CD8-positive, alpha-beta memory T cell (primary cell): ENCODE measurements at regions of chr3 and their contacts with region 1.

Region 1: DNA sequence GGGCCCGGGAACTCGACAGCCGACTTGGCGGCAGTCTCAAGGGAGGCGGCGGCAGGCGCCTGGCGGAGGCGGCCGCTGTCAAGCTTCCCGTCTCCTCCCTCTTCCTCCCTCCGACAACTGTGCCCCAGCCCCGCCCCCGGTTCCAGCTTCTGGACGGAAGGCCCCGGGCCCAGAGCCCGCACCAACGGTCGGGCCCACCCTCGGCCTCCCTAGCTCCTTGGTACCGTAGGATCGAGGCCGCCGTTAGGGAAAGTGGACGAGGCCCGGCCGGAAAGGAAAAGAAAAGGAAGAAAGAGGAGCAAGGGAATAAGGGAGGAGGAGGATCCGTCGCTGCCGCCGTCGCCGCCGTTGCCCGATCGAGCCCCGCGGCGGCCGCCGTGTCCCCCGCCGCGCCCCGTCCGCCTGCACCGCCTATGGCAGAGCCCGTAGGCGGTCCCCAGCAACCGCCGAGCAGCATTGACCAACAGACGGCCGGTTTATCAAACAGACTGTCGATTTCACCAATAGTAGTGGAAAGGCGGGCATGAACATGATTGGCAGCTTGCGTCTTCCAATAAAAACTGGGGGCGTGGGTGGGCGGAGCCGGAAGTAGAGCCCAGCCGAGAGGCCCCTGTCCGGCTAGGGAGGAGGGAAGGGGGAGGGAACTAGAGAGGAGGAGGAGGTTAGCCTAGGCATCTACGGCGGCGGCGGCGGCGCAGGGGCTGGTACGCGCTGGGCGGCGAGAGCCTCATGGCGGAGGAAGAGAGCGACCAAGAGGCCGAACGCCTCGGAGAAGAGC is at the starts of genes CGGBP1 and ZNF654:
- DNase-seq: peak; percentile 96 to 100 (median 99)
- H3K4me3 ChIP-seq: peak within 1 kb of the TSS; percentile 90
- H3K4me3 Mint-ChIP-seq: peak within 1 kb of the TSS; percentile 91 to 99 (median 96)
- H3K27ac ChIP-seq: peak within 1 kb of the TSS; percentile 81
- H3K27ac Mint-ChIP-seq: peak within 1 kb of the TSS; percentile 96 to 98 (median 98)
- H3K4me1 ChIP-seq: peaks cover 47% of the 10 kb centered on the region
- H3K4me1 Mint-ChIP-seq: peaks cover 66 to 77% (median 74%) of the 10 kb centered on the region in 3 donors
- H3K27me3 ChIP-seq: no peaks in the 10 kb centered on the region
- H3K27me3 Mint-ChIP-seq: no peaks in the 10 kb centered on the region
- total RNA-seq, gene CGGBP1: 94.5 to 95.9 TPM
- total RNA-seq, gene ZNF654: 16.0 to 16.4 TPM

Region 2: GRCh38 chr3:87227104-87227834 is 831.5 kb before region 1 on chr3 and contains the start of gene CHMP2B:
- CTCF ChIA-PET with region 1: no interaction called
- POLR2A ChIA-PET with region 1: interaction called, 10 read pairs
- DNase-seq: peak; percentile 86 to 94 (median 90)
- H3K4me3 ChIP-seq: peak within 1 kb of the TSS; percentile 96
- H3K4me3 Mint-ChIP-seq: peak within 1 kb of the TSS; percentile 97 to 100 (median 99)
- H3K27ac ChIP-seq: peak within 1 kb of the TSS; percentile 89
- H3K27ac Mint-ChIP-seq: peak within 1 kb of the TSS; percentile 93 to 99 (median 98)
- H3K4me1 ChIP-seq: peaks cover 24% of the 10 kb centered on the region
- H3K4me1 Mint-ChIP-seq: peaks cover 44 to 52% (median 47%) of the 10 kb centered on the region in 3 donors
- H3K27me3 ChIP-seq: no peaks in the 10 kb centered on the region
- H3K27me3 Mint-ChIP-seq: peaks cover 3 to 8% of the 10 kb centered on the region in 2 donors
- total RNA-seq, gene CHMP2B: 31.2 to 33.9 TPM

Region 3: DNA sequence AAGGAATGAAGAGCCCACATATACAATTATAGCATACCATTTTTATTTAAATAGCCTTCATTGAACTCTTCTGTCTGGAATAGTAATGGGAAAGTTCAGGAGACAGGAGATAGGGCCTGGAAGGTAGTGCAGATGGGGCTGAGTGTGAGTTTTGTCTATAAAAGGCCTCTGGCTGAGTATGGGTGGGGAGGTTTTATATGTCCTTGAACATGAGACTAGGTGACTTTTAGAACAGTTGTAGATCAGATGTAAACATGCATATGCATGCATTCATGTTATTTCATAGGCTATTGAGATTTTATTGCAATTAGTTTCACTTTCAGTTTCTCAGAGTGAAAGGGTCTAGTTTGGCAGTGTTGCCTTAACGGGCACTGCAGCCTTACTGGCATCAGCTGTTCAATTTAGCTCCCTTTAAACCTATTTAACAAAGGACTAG is 27.1 kb before region 1 on chr3:
- CTCF ChIA-PET with region 1: interaction called, 9 read pairs
- POLR2A ChIA-PET with region 1: interaction called, 21 read pairs
- DNase-seq: peak; percentile 5 to 53 (median 45)
- H3K4me3 ChIP-seq: peak overlapping the region; percentile 38
- H3K4me3 Mint-ChIP-seq: peak overlapping the region; percentile 80 to 89 (median 86)
- H3K27ac ChIP-seq: peak overlapping the region; percentile 47
- H3K27ac Mint-ChIP-seq: peak overlapping the region; percentile 76 to 97 (median 94)
- H3K4me1 ChIP-seq: peaks cover 22% of the 10 kb centered on the region
- H3K4me1 Mint-ChIP-seq: peaks cover 24 to 38% (median 36%) of the 10 kb centered on the region in 3 donors
- H3K27me3 ChIP-seq: no peaks in the 10 kb centered on the region
- H3K27me3 Mint-ChIP-seq: peaks cover 0 to under 1% of the 10 kb centered on the region in 2 donors

Region 4: GRCh38 chr3:88101142-88101541 is 42.4 kb after region 1 on chr3:
- CTCF ChIA-PET with region 1: no interaction called
- POLR2A ChIA-PET with region 1: no interaction called
- DNase-seq: no peak
- H3K4me3 ChIP-seq: no peak overlapping the region
- H3K4me3 Mint-ChIP-seq: no peak overlapping the region
- H3K27ac ChIP-seq: no peak overlapping the region
- H3K27ac Mint-ChIP-seq: peak overlapping the region in 1 of 8 donors; percentile 47
- H3K4me1 ChIP-seq: no peaks in the 10 kb centered on the region
- H3K4me1 Mint-ChIP-seq: peaks cover 20 to 22% (median 20%) of the 10 kb centered on the region in 3 donors
- H3K27me3 ChIP-seq: no peaks in the 10 kb centered on the region
- H3K27me3 Mint-ChIP-seq: no peaks in the 10 kb centered on the region

Region 5: DNA sequence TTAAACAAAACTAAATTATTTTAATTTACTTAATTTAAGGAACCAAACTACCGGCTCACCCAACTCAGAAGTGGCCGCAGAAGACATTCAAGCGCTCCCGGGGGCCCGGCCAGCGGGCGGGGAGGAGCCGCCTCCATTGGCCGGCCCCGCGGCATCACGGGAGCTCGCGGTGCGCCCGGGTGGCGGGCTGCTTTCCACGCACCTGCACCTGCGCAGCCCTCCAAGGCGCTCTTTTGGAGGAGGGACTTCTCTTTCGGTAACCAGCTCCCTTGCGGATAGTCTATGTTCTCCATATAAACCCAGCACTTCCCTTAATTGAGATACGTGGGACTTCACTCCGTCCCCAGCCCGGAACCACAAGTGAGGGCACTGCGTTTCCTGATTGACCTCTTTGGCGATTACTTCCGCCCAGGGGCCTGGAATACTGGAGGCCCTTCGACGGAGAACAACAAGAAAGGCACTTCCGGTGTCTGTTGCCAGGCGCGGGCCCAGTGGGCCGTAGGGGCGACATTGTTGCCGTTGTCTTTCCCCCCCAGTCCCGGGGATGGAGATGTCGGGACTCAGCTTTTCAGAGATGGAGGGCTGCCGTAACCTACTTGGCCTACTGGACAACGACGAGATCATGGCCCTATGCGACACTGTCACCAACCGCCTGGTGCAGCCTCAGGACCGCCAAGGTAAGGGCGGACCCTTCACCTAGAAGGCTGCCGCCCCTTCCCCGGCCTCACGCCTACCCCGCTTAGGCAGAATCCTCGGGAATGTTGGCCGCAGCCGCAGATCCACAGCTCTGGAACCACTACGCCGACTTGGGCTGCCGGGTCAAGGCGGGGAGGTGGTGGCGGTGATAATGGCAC is 91.0 kb after region 1 on chr3 and contains the start of gene C3orf38:
- CTCF ChIA-PET with region 1: interaction called, 7 read pairs
- POLR2A ChIA-PET with region 1: interaction called, 67 read pairs
- DNase-seq: peak; percentile 72 to 89 (median 82)
- H3K4me3 ChIP-seq: peak within 1 kb of the TSS; percentile 98
- H3K4me3 Mint-ChIP-seq: peak within 1 kb of the TSS; percentile 94 to 100 (median 98)
- H3K27ac ChIP-seq: peak within 1 kb of the TSS; percentile 93
- H3K27ac Mint-ChIP-seq: peak within 1 kb of the TSS; percentile 97 to 99 (median 98)
- H3K4me1 ChIP-seq: peaks cover 27% of the 10 kb centered on the region
- H3K4me1 Mint-ChIP-seq: peaks cover 38 to 44% (median 39%) of the 10 kb centered on the region in 3 donors
- H3K27me3 ChIP-seq: no peaks in the 10 kb centered on the region
- H3K27me3 Mint-ChIP-seq: no peaks in the 10 kb centered on the region
- total RNA-seq, gene C3orf38: 25.9 to 28.2 TPM

Region 6: GRCh38 chr3:88362428-88362827 is 303.6 kb after region 1 on chr3:
- CTCF ChIA-PET with region 1: no interaction called
- POLR2A ChIA-PET with region 1: no interaction called
- DNase-seq: no peak
- H3K4me3 ChIP-seq: no peak overlapping the region
- H3K4me3 Mint-ChIP-seq: no peak overlapping the region
- H3K27ac ChIP-seq: no peak overlapping the region
- H3K27ac Mint-ChIP-seq: no peak overlapping the region
- H3K4me1 ChIP-seq: no peaks in the 10 kb centered on the region
- H3K4me1 Mint-ChIP-seq: no peaks in the 10 kb centered on the region
- H3K27me3 ChIP-seq: no peaks in the 10 kb centered on the region
- H3K27me3 Mint-ChIP-seq: no peaks in the 10 kb centered on the region